ENCODE measurements at regions of chr20 and their contacts with region 1.

Region 1: DNA sequence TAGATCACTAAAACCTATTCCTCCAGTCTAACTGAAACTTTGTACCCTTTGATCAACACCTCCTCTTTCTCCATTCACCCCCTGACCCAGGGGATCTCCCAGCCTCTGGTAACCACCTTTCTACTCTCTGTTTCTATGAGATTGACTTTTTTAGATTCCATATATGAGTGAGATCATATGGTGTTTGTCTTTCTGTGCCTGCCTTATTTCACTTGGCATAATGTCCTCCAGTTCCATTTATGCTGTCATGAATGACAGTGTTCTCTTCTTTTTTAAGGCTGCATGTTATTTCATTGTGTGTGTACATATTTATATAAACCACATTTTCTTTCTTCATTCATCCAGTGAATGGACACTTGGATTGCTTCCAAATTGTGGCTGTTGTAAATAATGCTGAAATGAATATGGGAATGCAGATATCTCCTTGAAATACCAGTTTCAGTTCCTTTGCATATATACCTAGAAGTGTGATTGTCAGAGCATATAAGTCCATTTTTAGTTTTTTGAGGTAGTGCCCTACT is 57.7 kb downstream of the DHX35 start:
- DNase-seq: peak; percentile 72
- H3K4me3 Mint-ChIP-seq: no peak overlapping the region
- H3K27ac Mint-ChIP-seq: no peak overlapping the region
- H3K4me1 Mint-ChIP-seq: peaks cover 59% of the 10 kb centered on the region
- H3K27me3 Mint-ChIP-seq: no peaks in the 10 kb centered on the region

Region 2: GRCh38 chr20:38973645-38974044 is 46.2 kb before region 1 on chr20:
- CTCF ChIA-PET with region 1: no interaction called
- POLR2A ChIA-PET with region 1: no interaction called
- intact Hi-C with region 1: loop called (anchors 2 kb)
- DNase-seq: no peak
- H3K4me3 Mint-ChIP-seq: no peak overlapping the region
- H3K27ac Mint-ChIP-seq: no peak overlapping the region
- H3K4me1 Mint-ChIP-seq: peaks cover 7% of the 10 kb centered on the region
- H3K27me3 Mint-ChIP-seq: no peaks in the 10 kb centered on the region

Region 3: GRCh38 chr20:38997622-38998021 is 22.2 kb before region 1 on chr20:
- CTCF ChIA-PET with region 1: no interaction called
- POLR2A ChIA-PET with region 1: no interaction called
- intact Hi-C with region 1: loop called (anchors 2 kb)
- DNase-seq: peak; percentile 83
- H3K4me3 Mint-ChIP-seq: no peak overlapping the region
- H3K27ac Mint-ChIP-seq: peak overlapping the region; percentile 9
- H3K4me1 Mint-ChIP-seq: peaks cover 22% of the 10 kb centered on the region
- H3K27me3 Mint-ChIP-seq: no peaks in the 10 kb centered on the region

Measured in activated CD4-positive, alpha-beta memory T cell treated with anti-CD3 and anti-CD28 coated beads for 36 hours (primary cell).